K562 (cell line): ENCODE measurements at regions of chr19 and their contacts with region 1.

Region 1: DNA sequence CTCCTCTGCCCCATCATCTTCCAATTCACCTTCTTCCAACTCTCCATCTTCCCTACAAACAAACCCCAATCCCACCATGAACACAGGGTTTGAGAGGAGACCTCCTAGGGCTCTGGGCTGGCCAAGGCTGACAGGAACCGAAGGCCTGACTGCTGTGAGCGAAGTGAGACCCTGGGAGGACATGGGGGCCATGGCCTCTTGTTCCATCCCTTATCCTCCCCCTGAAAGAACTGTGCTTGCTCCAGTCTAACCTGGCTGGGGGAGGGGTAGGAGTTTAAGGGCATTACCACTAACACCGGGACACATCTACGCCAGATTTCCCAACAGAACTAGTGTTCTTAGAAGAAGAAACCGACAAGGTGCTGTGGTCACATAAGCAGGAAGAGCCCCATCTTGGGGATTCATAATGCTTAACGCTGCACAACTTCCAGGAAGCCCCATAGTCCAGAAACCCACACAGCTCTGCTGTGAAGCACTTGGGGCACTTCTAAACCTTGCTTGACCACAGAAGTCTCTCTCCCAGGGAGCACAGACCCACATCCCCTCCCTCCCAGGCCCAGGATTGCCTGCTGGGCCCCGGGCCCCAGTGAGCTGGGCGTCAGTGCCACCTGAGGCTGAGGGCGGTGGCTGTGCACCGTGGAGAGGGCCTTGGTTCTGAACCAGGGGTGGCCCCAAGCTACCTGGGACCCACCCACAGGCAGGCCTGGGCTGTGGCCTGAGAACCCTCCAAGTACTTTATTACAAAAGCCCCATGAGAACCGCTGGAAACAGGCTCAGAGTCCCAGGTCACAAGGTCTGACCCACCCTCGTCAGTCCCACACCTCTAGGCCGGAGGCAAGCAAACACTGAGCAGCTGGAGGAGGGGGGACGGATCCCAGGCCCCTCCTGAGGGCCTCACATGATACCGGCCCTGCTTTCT is 18.8 kb downstream of the ZC3H4 start:
- DNase-seq: no peak
- ATAC-seq: no peak
- H3K4me3 ChIP-seq: no peak overlapping the region
- H3K27ac ChIP-seq: peak overlapping the region; percentile 15; the same call in 2 of the 3 replicates
- H3K4me1 ChIP-seq: peaks cover 10 to 29% of the 10 kb centered on the region in 2 experiments; a peak in 4 of 5 replicates
- H3K27me3 ChIP-seq: no peaks in the 10 kb centered on the region
- CTCF ChIP-seq: no peak
- EP300 ChIP-seq: no peak
- POLR2A ChIP-seq: no peak
- RAD21 ChIP-seq: no peak

Region 2: DNA sequence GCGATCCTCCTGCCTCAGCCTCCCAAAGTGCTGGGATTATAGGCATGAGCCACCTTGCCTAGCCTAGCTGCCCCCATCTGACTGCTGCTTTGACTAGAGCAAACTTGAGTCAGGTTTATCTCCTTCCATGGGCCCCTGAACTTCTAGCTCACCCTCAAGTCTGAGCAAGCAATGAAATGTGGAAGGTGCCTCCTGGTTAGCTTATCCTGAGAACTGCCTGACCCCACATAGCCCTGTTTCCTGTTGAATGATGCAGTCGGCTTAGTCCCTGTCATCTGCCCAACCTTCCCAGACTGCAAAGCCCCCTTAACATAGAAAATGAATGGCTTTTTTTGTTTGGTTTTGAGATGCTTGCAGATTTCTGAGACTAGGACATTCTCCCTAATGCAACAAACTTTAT is 37.5 kb before region 1 on chr19:
- CTCF ChIA-PET with region 1: no interaction called
- POLR2A ChIA-PET with region 1: no interaction called
- in situ Hi-C with region 1: no loop called
- intact Hi-C with region 1: no loop called
- DNase-seq: no peak
- ATAC-seq: peak; percentile 65
- H3K4me3 ChIP-seq: no peak overlapping the region
- H3K27ac ChIP-seq: no peak overlapping the region
- H3K4me1 ChIP-seq: peaks cover 3 to 17% of the 10 kb centered on the region in 2 experiments; a peak in 4 of 5 replicates
- H3K27me3 ChIP-seq: no peaks in the 10 kb centered on the region
- CTCF ChIP-seq: no peak
- EP300 ChIP-seq: no peak
- POLR2A ChIP-seq: no peak
- RAD21 ChIP-seq: no peak

Region 3: GRCh38 chr19:47107202-47107940 is 12.6 kb after region 1 on chr19:
- CTCF ChIA-PET with region 1: no interaction called
- POLR2A ChIA-PET with region 1: interaction called, 13 read pairs
- in situ Hi-C with region 1: no loop called
- intact Hi-C with region 1: no loop called
- DNase-seq: peak in 2 of 4 experiments; percentile 2 to 49
- ATAC-seq: no peak
- H3K4me3 ChIP-seq: 0 out of 2 replicates have a peak overlapping the region, but pooled peaks have one; percentile 10
- H3K27ac ChIP-seq: peak overlapping the region; percentile 96
- H3K4me1 ChIP-seq: peaks cover 6 to 43% of the 10 kb centered on the region in 2 experiments
- H3K27me3 ChIP-seq: no peaks in the 10 kb centered on the region
- CTCF ChIP-seq: no peak
- EP300 ChIP-seq: 0 out of 2 replicates have a peak, but pooled peaks have one; percentile 3
- POLR2A ChIP-seq: no peak
- RAD21 ChIP-seq: no peak